Posterior cingulate gyrus (tissue), 11 donors: ENCODE measurements at regions of chr20 and their contacts with region 1.

Region 1: DNA sequence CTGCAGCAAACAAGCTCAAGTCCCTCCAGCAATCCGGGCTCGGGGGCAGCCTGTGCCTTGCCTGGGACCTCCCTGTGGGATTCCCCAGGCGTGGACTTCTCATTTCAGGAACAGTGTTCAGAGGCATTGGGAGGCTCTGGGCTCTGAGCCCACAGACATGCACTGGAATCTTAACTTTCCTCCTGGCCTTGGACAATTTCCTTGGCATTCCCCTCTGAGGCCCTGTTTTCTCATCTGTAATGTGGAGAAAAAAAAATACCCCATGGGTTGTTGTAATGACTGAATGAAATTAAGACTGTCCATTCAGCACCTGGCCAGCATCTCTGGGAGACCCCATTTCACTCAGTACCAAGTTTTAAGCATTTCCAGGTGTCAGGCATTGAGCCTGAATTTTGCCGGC is 17.6 kb downstream of the BPIFB4 start:
- DNase-seq: no peak

Region 2: DNA sequence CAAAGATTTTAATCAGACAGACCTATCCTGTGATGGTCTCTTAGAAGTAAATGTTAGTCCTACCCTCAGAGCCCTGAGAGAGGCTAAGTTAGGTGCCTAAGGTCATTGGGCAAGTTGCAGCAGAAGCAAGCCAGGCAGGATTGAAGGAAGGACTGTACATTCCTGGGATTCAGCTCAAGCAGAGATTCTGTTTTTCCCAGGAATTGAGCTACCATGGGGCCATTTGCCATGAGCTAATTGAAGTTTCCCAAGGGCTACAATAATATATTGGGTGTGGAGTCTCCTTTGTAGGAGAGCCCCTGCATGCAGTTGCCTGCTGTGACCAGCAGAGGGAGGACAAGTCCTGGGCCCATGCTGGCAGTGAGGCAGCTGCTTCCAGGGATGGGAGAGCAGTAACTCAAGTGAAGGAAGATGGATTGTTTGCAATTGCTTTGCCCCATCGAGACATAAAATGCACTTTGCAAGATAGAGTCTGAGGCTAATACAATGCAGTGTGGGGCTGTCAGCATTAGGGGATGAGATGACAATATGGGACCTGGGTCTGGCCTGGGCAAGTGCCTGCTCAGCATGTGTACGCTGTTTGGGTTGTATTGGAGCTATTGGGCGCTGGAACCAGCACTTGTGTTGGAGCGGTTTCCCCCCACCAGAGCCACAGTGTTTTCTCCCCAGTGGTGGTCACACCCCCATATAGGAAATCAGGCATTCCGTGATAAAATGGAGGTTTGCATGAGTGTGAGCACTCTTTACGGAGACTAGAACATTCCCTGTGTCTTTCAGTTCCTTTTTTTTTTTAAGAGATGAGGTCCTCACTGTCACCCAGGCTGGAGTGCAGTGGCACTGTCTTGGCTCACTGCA is 306.9 kb before region 1 on chr20:
- intact Hi-C with region 1: loop called (anchors 2 kb)
- DNase-seq: peak; percentile 61 to 98 (median 86)

Region 3: DNA sequence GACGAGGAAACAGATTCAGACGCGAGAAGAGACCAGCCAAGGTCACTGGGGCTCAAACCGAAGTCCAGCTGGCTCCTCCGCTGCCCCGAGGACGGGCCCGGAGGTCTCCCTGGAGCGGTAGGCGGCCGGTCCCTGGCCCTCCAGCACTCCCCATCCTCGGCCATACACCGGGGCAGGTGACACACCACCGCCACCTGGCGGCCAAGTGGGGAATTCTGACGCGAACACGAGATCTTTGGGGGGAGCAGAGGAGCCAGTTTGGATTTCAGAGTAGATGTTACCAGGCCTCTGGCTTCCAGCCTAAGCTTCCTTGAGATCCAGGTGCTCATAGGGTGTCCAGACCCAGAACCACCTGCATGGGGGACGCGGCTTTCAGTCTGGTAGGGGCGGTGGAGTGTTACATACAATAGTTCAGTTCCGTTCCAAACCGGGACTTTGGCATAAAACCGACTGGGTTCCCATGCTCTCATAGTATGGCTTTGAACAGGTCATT is 202.2 kb after region 1 on chr20:
- intact Hi-C with region 1: loop called (anchors 1 kb)
- DNase-seq: peak; percentile 41 to 96 (median 78)